OCI-LY7 (cell line): ENCODE measurements at regions of chr6 and their contacts with region 1.

Region 1: DNA sequence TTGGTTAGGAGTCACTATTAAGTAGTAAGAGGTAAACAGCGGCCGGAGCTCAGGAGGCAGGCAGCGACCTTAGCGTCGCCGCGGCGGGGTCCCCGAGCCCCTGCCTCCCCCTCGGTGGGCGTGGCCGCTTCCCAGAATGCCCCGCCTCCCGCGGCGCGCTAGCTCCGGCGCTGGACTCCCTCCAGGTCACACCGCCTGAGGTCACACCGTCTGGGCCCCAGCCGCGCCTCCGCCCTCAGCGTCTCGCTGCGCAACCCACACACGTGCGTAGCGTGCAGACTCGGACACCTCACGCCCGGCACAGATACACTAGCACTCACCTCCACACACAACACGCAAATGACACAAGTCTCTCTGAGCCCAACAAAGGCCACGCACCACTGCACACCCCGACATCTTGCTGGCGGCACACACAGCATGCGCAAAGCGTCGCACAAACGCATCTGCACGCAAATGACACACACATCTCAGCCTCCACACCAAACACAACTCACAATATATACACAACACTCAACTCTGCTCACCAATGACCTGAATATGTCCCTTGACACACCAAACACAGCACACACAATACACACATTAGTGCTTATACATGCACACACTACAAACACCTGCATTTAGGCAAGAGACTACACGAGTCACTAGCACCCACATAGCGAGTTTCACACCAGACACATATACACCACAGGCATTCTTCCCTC is 17.6 kb upstream of the CDKN1A start:
- DNase-seq: no peak
- H3K4me3 ChIP-seq: no peak overlapping the region
- H3K27ac ChIP-seq: no peak overlapping the region
- H3K4me1 ChIP-seq: peaks cover 91% of the 10 kb centered on the region
- CTCF ChIP-seq: no peak

Region 2: GRCh38 chr6:36623547-36624459 is 37.1 kb before region 1 on chr6:
- CTCF ChIA-PET with region 1: interaction called, 3 read pairs
- POLR2A ChIA-PET with region 1: interaction called, 3 read pairs
- intact Hi-C with region 1: loop called (anchors 5 kb)
- DNase-seq: peak; percentile 83
- H3K4me3 ChIP-seq: no peak overlapping the region
- H3K27ac ChIP-seq: no peak overlapping the region
- H3K4me1 ChIP-seq: peaks cover 22% of the 10 kb centered on the region
- CTCF ChIP-seq: peak; percentile 96